GM18951 (cell line): ENCODE measurements at regions of chr18 and their contacts with region 1.

Region 1: GRCh38 chr18:62128157-62128556 is 58.7 kb downstream of the PIGN start:
- POLR2A ChIP-seq: no peak

Region 2: GRCh38 chr18:61575419-61575818 is 552.7 kb before region 1 on chr18:
- in situ Hi-C with region 1: loop called (anchors 10 kb)
- POLR2A ChIP-seq: no peak